Activated T-helper 2 cell treated with anti-CD3 and anti-CD28 coated beads, Interferon-gamma antibody, Interleukin-2, Interleukin-4, amounts not matched to agents 10 μg/mL and 5 μg/mL and 100 μg/mL, durations not matched to agents 14 hours and 24 hours and 36 hours (primary cell): ENCODE measurements at regions of chr15 and their contacts with region 1.

Region 1: DNA sequence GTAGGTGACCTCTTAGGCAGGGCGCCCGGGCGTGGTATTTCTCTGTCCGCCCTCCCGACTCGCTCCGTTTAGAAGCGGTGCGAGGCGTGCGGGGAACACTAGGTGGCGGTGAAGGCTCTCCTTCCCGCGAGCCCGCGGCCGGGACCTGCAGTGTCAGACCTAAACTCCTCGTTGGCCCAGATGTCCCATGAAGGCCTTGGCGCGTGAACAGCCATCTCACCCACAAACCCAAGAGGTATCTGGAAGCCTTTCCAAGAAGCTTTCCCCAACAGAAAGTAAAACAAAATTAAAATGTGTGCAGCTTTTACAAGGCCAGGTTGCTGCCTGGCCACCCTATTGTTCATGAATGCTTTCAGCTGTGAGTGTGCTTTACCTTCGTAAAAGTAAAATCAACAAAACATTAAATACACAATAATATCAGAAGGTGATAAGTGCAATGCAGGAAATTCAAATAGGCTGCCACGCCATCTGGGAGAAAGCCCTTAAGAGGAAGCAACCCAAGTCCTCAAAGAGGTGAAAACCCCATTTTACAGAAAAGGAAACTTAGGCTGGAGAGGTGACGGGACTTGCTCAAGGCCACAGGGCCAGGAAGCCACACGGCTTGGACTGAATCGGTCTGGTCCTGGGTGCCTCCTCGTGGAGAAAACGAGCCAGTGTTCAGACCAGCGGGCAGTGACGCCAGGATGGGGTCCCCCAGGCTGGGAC is 120.3 kb downstream of the ETFA start:
- DNase-seq: peak; percentile 61
- H3K4me3 Mint-ChIP-seq: no peak overlapping the region
- H3K27ac Mint-ChIP-seq: no peak overlapping the region
- H3K4me1 Mint-ChIP-seq: peaks cover 9% of the 10 kb centered on the region
- H3K27me3 Mint-ChIP-seq: peaks cover 30% of the 10 kb centered on the region

Region 2: DNA sequence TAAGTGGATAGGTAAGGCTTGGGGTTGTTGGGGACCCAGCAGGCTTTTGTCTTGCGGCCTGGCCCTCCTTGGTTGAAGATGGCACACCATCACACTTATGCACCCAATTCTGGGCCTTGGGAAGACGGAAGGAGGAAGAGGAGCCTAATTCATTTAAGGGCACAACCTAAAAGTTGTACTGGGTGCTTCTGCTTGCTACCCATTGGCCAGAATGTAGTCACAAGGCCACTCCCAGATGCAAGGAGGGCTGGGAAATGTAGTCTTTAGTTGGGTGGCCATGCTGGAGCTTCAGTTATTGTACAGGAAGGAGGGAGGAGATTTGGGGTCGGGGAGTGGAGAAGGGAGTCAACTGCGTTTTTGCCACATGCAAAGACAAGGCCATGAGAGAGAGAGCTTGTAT is 22.0 kb before region 1 on chr15:
- intact Hi-C with region 1: no loop called
- DNase-seq: no peak
- H3K4me3 Mint-ChIP-seq: no peak overlapping the region
- H3K27ac Mint-ChIP-seq: no peak overlapping the region
- H3K4me1 Mint-ChIP-seq: no peaks in the 10 kb centered on the region
- H3K27me3 Mint-ChIP-seq: peaks cover 8% of the 10 kb centered on the region

Region 3: DNA sequence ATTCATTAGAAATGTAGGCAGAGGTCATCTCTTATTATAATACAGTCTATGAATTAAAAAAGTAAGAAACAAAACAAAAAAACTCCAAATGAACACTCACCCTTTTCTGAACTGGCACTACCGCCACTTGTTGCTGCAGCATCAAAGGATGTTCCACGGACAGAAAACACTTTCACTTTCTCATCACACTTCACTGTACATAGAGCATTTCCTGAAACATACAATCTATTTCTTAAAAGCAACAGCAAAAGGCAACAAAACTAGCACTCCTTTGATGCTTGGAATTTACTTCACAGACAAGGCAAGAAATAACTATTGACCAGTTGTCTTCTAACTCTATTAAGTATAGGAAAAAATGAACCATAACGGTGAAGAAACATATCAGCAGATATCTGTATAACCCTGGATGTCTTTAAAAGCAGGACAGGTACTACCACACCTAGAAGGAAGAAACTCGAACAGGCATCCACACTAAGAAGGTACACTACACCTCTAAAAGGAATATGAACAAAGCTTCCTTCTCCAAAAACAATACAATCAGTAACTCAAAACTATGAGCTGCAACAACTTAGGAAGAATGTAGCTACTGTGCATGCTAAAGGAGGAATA is 95.4 kb after region 1 on chr15:
- intact Hi-C with region 1: loop called (anchors 2 kb)
- DNase-seq: no peak
- H3K4me3 Mint-ChIP-seq: peak overlapping the region; percentile 71
- H3K27ac Mint-ChIP-seq: peak overlapping the region; percentile 58
- H3K4me1 Mint-ChIP-seq: peaks cover 13% of the 10 kb centered on the region
- H3K27me3 Mint-ChIP-seq: no peaks in the 10 kb centered on the region

Region 4: DNA sequence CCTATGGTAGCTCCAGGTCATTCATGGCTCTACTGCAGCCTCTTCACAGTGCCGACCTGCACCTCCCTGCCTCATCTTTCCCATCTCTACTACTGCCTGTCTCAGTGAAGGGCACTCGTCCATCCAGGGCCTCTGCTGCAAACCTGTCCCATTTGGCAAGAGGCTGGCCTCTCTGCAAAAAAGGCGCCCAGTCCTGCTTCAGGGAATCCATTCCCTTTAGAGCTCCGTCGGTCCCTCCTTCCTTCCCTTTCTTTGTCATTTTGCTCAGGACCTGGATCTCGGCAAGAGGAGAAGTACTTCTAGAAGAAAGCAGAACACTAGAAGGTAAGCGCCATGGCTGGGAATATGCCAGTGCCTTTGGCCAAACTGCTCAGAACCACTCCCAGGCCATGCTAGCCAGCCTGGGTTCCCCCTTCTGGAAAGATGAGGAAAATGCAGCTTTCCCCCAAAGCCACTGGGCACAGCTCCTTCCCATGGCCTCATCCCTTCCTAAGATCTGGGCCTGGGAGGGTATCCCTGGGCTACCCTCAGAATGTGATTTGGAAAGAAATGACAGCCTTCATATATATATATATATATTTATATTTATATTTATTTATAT is 139.2 kb after region 1 on chr15:
- intact Hi-C with region 1: loop called (anchors 5 kb)
- DNase-seq: no peak
- H3K4me3 Mint-ChIP-seq: no peak overlapping the region
- H3K27ac Mint-ChIP-seq: no peak overlapping the region
- H3K4me1 Mint-ChIP-seq: peaks cover under 1% of the 10 kb centered on the region
- H3K27me3 Mint-ChIP-seq: peaks cover 45% of the 10 kb centered on the region